ENCODE measurements at regions of chr16 and their contacts with region 1.

Region 1: GRCh38 chr16:84672276-84673202 is 24.2 kb downstream of the KLHL36 start:
- DNase-seq: no peak
- ATAC-seq: peak; percentile 98
- H3K4me3 ChIP-seq: no peak overlapping the region
- H3K27ac ChIP-seq: no peak overlapping the region
- H3K4me1 ChIP-seq: no peaks in the 10 kb centered on the region
- H3K27me3 ChIP-seq: no peaks in the 10 kb centered on the region
- CTCF ChIP-seq: peak; percentile 86 to 95 (median 93)
- EP300 ChIP-seq: no peak
- POLR2A ChIP-seq: no peak
- RAD21 ChIP-seq: peak; percentile 74

Region 2: GRCh38 chr16:84647828-84648594 is 24.5 kb before region 1 on chr16 and contains the start of gene KLHL36:
- CTCF ChIA-PET with region 1: interaction called, 15 read pairs
- POLR2A ChIA-PET with region 1: no interaction called
- RAD21 ChIA-PET with region 1: no interaction called
- SMC1A ChIA-PET with region 1: no interaction called
- in situ Hi-C with region 1: no loop called
- intact Hi-C with region 1: no loop called
- DNase-seq: no peak
- ATAC-seq: peak; percentile 84
- H3K4me3 ChIP-seq: peak within 1 kb of the TSS; percentile 81
- H3K27ac ChIP-seq: peak within 1 kb of the TSS; percentile 79
- H3K4me1 ChIP-seq: peaks cover 21% of the 10 kb centered on the region
- H3K27me3 ChIP-seq: no peaks in the 10 kb centered on the region
- CTCF ChIP-seq: peak in 2 of 3 experiments; percentile 3 to 9; a peak in 1 of 6 replicates
- EP300 ChIP-seq: no peak
- POLR2A ChIP-seq: peak; percentile 68
- RAD21 ChIP-seq: no peak
- polyA plus RNA-seq, gene KLHL36: 2.6 to 2.7 TPM

Region 3: DNA sequence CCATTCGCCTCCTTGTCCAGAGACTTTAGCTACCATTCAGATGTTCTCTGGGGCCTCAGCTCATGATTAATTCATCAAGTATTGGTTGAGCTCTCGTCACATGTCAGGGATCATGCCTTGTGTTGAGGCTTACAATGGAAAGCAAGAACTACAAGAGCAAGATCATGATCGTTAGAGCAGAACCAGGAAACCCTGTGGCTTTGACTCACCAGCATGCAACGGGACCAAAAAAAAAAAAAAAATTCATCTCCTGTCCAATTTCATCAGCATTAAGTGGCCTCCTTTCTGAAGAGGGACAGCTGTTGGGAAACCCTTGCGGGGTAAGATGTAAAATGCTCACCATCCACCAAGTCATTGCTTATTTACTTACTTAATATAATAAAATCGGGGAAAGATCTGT is 15.2 kb after region 1 on chr16:
- CTCF ChIA-PET with region 1: interaction called, 10 read pairs
- POLR2A ChIA-PET with region 1: interaction called, 3 read pairs
- RAD21 ChIA-PET with region 1: interaction called, 3 read pairs
- SMC1A ChIA-PET with region 1: interaction called, 7 read pairs
- in situ Hi-C with region 1: no loop called
- intact Hi-C with region 1: no loop called
- DNase-seq: peak; percentile 76
- ATAC-seq: peak; percentile 96
- H3K4me3 ChIP-seq: no peak overlapping the region
- H3K27ac ChIP-seq: peak overlapping the region; percentile 38; the same call in 1 of the 2 replicates
- H3K4me1 ChIP-seq: peaks cover 10% of the 10 kb centered on the region
- H3K27me3 ChIP-seq: no peaks in the 10 kb centered on the region
- CTCF ChIP-seq: no peak
- EP300 ChIP-seq: no peak
- POLR2A ChIP-seq: no peak
- RAD21 ChIP-seq: no peak

Region 4: DNA sequence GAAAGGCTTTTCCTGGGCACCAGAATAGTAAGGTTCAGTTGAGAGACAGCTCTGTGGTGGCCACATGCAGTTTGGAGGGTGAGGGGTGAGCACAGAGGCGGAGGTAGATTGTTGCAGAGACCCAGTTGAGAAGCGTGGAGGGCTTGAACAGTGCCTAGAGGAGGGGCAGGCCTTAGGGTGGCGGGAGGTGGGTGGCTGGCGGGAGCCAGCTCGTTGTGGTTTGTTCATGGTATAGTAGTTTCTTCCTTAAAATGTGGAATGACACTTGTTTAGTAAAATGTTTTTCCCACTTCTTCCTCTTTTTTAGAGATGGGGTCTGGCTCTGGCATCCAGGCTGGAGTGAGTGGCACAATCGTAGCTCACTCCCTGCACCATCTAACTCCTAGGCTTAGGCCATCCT is 41.5 kb after region 1 on chr16:
- CTCF ChIA-PET with region 1: interaction called, 20 read pairs
- POLR2A ChIA-PET with region 1: no interaction called
- RAD21 ChIA-PET with region 1: no interaction called
- SMC1A ChIA-PET with region 1: no interaction called
- in situ Hi-C with region 1: no loop called
- intact Hi-C with region 1: no loop called
- DNase-seq: no peak
- ATAC-seq: no peak; the same call in 2 of the 3 replicates
- H3K4me3 ChIP-seq: no peak overlapping the region
- H3K27ac ChIP-seq: no peak overlapping the region
- H3K4me1 ChIP-seq: peaks cover 9% of the 10 kb centered on the region
- H3K27me3 ChIP-seq: no peaks in the 10 kb centered on the region
- CTCF ChIP-seq: no peak
- EP300 ChIP-seq: no peak
- POLR2A ChIP-seq: no peak
- RAD21 ChIP-seq: no peak

Region 5: DNA sequence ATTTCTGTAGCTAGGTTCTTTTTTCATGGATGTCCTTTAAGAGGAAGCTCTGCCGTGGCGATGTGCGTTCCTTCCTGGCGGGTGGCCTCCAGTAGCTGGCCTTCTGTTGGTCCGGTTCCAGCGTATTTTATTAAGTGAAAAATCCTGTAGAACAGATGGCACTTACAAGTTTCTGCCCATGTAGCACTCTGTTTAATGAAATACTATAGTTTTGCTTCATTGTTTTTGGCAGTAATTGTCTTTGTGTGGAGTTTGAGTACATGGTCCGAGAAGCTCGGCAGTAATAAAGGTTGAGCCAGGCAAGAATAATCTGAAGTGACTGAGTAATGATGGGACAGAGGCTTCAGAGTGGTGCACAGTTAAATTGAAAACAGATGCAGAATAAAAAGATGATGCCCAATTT is 47.6 kb after region 1 on chr16:
- CTCF ChIA-PET with region 1: interaction called, 102 read pairs
- POLR2A ChIA-PET with region 1: interaction called, 4 read pairs
- RAD21 ChIA-PET with region 1: interaction called, 37 read pairs
- SMC1A ChIA-PET with region 1: interaction called, 65 read pairs
- in situ Hi-C with region 1: no loop called
- intact Hi-C with region 1: no loop called
- DNase-seq: no peak
- ATAC-seq: no peak
- H3K4me3 ChIP-seq: no peak overlapping the region
- H3K27ac ChIP-seq: no peak overlapping the region
- H3K4me1 ChIP-seq: peaks cover 22% of the 10 kb centered on the region
- H3K27me3 ChIP-seq: no peaks in the 10 kb centered on the region
- CTCF ChIP-seq: no peak
- EP300 ChIP-seq: no peak
- POLR2A ChIP-seq: no peak
- RAD21 ChIP-seq: no peak